K562 (cell line): ENCODE measurements at regions of chr16 and their contacts with region 1.

Region 1: GRCh38 chr16:25079637-25080378 is 31.7 kb upstream of the LCMT1 start:
- DNase-seq: peak; percentile 33 to 62 (median 42)
- ATAC-seq: peak; percentile 76
- H3K4me3 ChIP-seq: no peak overlapping the region
- H3K27ac ChIP-seq: peak overlapping the region; percentile 44; the same call in 2 of the 3 replicates
- H3K4me1 ChIP-seq: peaks cover 0 to 15% of the 10 kb centered on the region in 2 experiments; a peak in 2 of 5 replicates
- H3K27me3 ChIP-seq: no peaks in the 10 kb centered on the region
- CTCF ChIP-seq: no peak
- EP300 ChIP-seq: peak; percentile 87
- POLR2A ChIP-seq: no peak
- RAD21 ChIP-seq: no peak

Region 2: GRCh38 chr16:25066747-25067631 is 12.8 kb before region 1 on chr16:
- CTCF ChIA-PET with region 1: no interaction called
- POLR2A ChIA-PET with region 1: interaction called, 11 read pairs
- in situ Hi-C with region 1: no loop called
- intact Hi-C with region 1: no loop called
- DNase-seq: peak; percentile 90 to 98 (median 96)
- ATAC-seq: peak; percentile 98
- H3K4me3 ChIP-seq: peak overlapping the region; percentile 73
- H3K27ac ChIP-seq: peak overlapping the region; percentile 86
- H3K4me1 ChIP-seq: peaks cover 14 to 18% of the 10 kb centered on the region in 2 experiments
- H3K27me3 ChIP-seq: no peaks in the 10 kb centered on the region
- CTCF ChIP-seq: no peak
- EP300 ChIP-seq: no peak
- POLR2A ChIP-seq: peak; percentile 92
- RAD21 ChIP-seq: no peak